Esophagus muscularis mucosa (tissue), 4 donors: ENCODE measurements at regions of chr6 and their contacts with region 1.

Region 1: GRCh38 chr6:36765594-36766398 is 68.2 kb downstream of the RAB44 start:
- DNase-seq: no peak
- H3K4me3 ChIP-seq: no peak overlapping the region
- H3K27ac ChIP-seq: no peak overlapping the region
- H3K4me1 ChIP-seq: peaks cover 21 to 42% (median 38%) of the 10 kb centered on the region in 4 donors
- H3K27me3 ChIP-seq: no peaks in the 10 kb centered on the region
- CTCF ChIP-seq: peak; percentile 79 to 94 (median 93)
- EP300 ChIP-seq: no peak
- POLR2A ChIP-seq: no peak

Region 2: DNA sequence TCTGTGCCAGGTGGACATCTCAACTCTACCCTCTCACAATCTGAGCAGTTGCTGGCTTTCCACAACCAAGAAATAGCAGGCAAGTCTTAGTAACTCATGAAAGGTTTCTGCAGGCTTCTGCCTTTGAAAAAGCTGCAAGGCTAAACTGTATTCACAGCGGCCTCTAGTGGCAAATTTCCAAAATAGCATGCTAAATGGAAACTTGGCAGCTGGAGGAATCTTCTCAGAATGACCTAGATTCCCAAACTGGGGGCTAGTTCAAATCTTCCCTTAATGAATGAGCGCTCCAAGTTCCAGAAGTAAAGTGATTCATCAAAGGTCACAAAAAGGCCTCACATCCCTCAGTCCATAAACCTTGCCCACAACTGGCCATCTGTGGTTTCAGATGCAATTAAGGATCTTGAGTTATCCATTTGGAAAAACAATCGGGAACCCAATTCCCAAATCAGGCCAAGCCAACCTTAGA is 85.4 kb after region 1 on chr6:
- intact Hi-C with region 1: loop called (anchors 2 kb)
- DNase-seq: no peak
- H3K4me3 ChIP-seq: no peak overlapping the region
- H3K27ac ChIP-seq: peak overlapping the region; percentile 37 to 60 (median 57)
- H3K4me1 ChIP-seq: peaks cover 29 to 50% (median 40%) of the 10 kb centered on the region in 4 donors
- H3K27me3 ChIP-seq: no peaks in the 10 kb centered on the region
- CTCF ChIP-seq: peak; percentile 60 to 83 (median 71)
- EP300 ChIP-seq: no peak
- POLR2A ChIP-seq: no peak